PC-9 (cell line): ENCODE measurements at regions of chr7 and their contacts with region 1.

Region 1: GRCh38 chr7:118389629-118390028 is 165.1 kb downstream of the ANKRD7 start:
- DNase-seq: no peak
- H3K4me3 ChIP-seq: no peak overlapping the region
- H3K27ac ChIP-seq: no peak overlapping the region
- H3K4me1 ChIP-seq: no peaks in the 10 kb centered on the region
- H3K27me3 ChIP-seq: no peaks in the 10 kb centered on the region
- CTCF ChIP-seq: no peak

Region 2: GRCh38 chr7:118330373-118330772 is 59.3 kb before region 1 on chr7:
- CTCF ChIA-PET with region 1: no interaction called
- POLR2A ChIA-PET with region 1: interaction called, 12 read pairs
- intact Hi-C with region 1: no loop called
- DNase-seq: no peak
- H3K4me3 ChIP-seq: no peak overlapping the region
- H3K27ac ChIP-seq: no peak overlapping the region
- H3K4me1 ChIP-seq: no peaks in the 10 kb centered on the region
- H3K27me3 ChIP-seq: no peaks in the 10 kb centered on the region
- CTCF ChIP-seq: no peak

Region 3: DNA sequence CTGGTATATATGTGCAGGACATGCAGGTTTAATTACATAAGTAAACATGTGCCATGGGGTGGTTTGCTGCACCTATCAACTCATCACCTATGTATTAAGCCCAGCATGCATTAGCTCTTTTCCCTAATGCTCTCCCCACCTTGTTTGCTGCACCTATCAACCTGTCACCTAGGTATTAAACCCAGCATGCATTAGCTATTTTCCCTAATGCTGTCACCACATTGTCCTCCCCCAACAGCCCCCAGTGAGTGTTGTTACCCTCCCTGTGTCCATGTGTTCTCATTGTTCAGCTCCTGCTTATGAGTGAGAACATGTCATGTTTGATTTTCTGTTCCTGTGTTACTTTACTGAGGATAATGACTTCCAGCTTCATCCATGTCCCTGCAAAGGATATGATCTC is 135.4 kb after region 1 on chr7:
- CTCF ChIA-PET with region 1: no interaction called
- POLR2A ChIA-PET with region 1: no interaction called
- intact Hi-C with region 1: no loop called
- DNase-seq: no peak
- H3K4me3 ChIP-seq: no peak overlapping the region
- H3K27ac ChIP-seq: no peak overlapping the region
- H3K4me1 ChIP-seq: no peaks in the 10 kb centered on the region
- H3K27me3 ChIP-seq: no peaks in the 10 kb centered on the region
- CTCF ChIP-seq: no peak